Spleen (tissue), 13 donors: ENCODE measurements at regions of chr2 and their contacts with region 1.

Region 1: GRCh38 chr2:46364797-46365457 is 67.7 kb downstream of the EPAS1 start:
- DNase-seq: no peak
- H3K4me3 ChIP-seq: no peak overlapping the region
- H3K27ac ChIP-seq: no peak overlapping the region
- H3K4me1 ChIP-seq: peaks cover 8 to 79% (median 29%) of the 10 kb centered on the region in 6 donors
- H3K27me3 ChIP-seq: no peaks in the 10 kb centered on the region
- CTCF ChIP-seq: peak; percentile 68 to 93 (median 85)
- POLR2A ChIP-seq: no peak

Region 2: GRCh38 chr2:46029332-46029811 is 335.6 kb before region 1 on chr2:
- intact Hi-C with region 1: loop called (anchors 10 kb)
- DNase-seq: no peak
- H3K4me3 ChIP-seq: no peak overlapping the region
- H3K27ac ChIP-seq: peak overlapping the region in 6 of 8 donors; percentile 14 to 64 (median 54)
- H3K4me1 ChIP-seq: peaks cover 0 to 28% (median 13%) of the 10 kb centered on the region in 6 donors
- H3K27me3 ChIP-seq: no peaks in the 10 kb centered on the region
- CTCF ChIP-seq: peak in 1 of 11 experiments; percentile 15
- POLR2A ChIP-seq: no peak

Region 3: GRCh38 chr2:46062637-46063412 is 302.1 kb before region 1 on chr2:
- intact Hi-C with region 1: loop called (anchors 10 kb)
- DNase-seq: peak; percentile 80
- H3K4me3 ChIP-seq: no peak overlapping the region
- H3K27ac ChIP-seq: peak overlapping the region in 3 of 8 donors; percentile 11 to 26 (median 23)
- H3K4me1 ChIP-seq: peaks cover 0 to 12% (median 0%) of the 10 kb centered on the region in 6 donors
- H3K27me3 ChIP-seq: no peaks in the 10 kb centered on the region
- CTCF ChIP-seq: peak; percentile 77 to 92 (median 85)
- POLR2A ChIP-seq: no peak

Region 4: GRCh38 chr2:46385786-46386577 is 21.1 kb after region 1 on chr2:
- intact Hi-C with region 1: no loop called
- DNase-seq: no peak
- H3K4me3 ChIP-seq: no peak overlapping the region
- H3K27ac ChIP-seq: peak overlapping the region in 5 of 8 donors; percentile 9 to 81 (median 69)
- H3K4me1 ChIP-seq: peaks cover 0 to 47% (median 8%) of the 10 kb centered on the region in 6 donors
- H3K27me3 ChIP-seq: no peaks in the 10 kb centered on the region
- CTCF ChIP-seq: no peak
- POLR2A ChIP-seq: no peak

Region 5: GRCh38 chr2:46490521-46491141 is 125.7 kb after region 1 on chr2:
- intact Hi-C with region 1: no loop called
- DNase-seq: peak; percentile 86
- H3K4me3 ChIP-seq: no peak overlapping the region
- H3K27ac ChIP-seq: peak overlapping the region in 7 of 8 donors; percentile 26 to 73 (median 65)
- H3K4me1 ChIP-seq: peaks cover 9 to 56% (median 24%) of the 10 kb centered on the region in 6 donors
- H3K27me3 ChIP-seq: no peaks in the 10 kb centered on the region
- CTCF ChIP-seq: peak in 1 of 11 experiments; percentile 20
- POLR2A ChIP-seq: no peak